A673 (cell line): ENCODE measurements at regions of chr7 and their contacts with region 1.

Region 1: DNA sequence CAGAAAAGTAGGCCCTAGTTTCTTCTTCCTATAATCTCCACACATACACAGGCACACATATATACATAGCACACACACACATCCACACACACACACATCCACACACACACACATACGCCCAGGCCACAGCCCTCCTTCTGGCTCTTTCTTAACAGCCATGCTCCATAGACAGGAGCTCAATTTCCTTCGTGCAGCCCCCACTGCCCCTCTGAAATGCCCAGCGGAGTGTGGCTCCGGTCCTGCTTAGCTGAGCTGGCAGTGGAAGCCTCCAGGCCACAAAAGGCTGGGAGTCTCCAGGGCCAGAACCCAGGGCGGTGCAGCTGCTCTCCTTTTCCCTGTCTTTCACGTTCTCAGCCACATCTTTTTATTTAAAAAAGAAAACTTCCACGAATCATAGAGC is 282.9 kb upstream of the IGFBP3 start:
- DNase-seq: no peak
- H3K4me3 ChIP-seq: no peak overlapping the region
- H3K27ac ChIP-seq: no peak overlapping the region
- H3K4me1 ChIP-seq: no peaks in the 10 kb centered on the region
- H3K27me3 ChIP-seq: no peaks in the 10 kb centered on the region
- CTCF ChIP-seq: no peak

Region 2: GRCh38 chr7:45917658-45918057 is 286.3 kb before region 1 on chr7:
- CTCF ChIA-PET with region 1: no interaction called
- POLR2A ChIA-PET with region 1: no interaction called
- intact Hi-C with region 1: no loop called
- DNase-seq: peak; percentile 78
- H3K4me3 ChIP-seq: no peak overlapping the region
- H3K27ac ChIP-seq: no peak overlapping the region
- H3K4me1 ChIP-seq: peaks cover 3% of the 10 kb centered on the region
- H3K27me3 ChIP-seq: peaks cover 71% of the 10 kb centered on the region
- CTCF ChIP-seq: peak; percentile 93

Region 3: GRCh38 chr7:46281071-46281470 is 77.1 kb after region 1 on chr7:
- CTCF ChIA-PET with region 1: no interaction called
- POLR2A ChIA-PET with region 1: interaction called, 19 read pairs
- intact Hi-C with region 1: no loop called
- DNase-seq: no peak
- H3K4me3 ChIP-seq: no peak overlapping the region
- H3K27ac ChIP-seq: no peak overlapping the region
- H3K4me1 ChIP-seq: no peaks in the 10 kb centered on the region
- H3K27me3 ChIP-seq: no peaks in the 10 kb centered on the region
- CTCF ChIP-seq: no peak

Region 4: DNA sequence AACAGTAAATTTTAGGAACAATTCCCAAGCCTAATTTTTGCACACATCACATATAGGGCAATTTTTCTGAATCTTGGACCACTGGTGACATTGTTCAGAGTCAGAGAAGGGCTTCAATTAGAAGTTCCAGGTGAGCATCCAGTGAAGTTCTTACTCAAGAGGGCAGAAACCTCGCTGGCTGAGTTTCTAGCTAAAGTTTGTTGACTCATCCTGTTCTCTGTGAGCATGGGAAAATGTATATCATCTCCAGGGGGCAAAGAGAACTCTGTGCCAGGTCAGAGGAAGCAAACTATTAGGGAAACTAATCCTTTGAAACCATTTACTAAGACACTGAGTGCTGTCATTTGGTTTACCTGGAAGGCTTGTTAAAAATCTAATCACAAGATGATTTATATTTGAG is 412.7 kb after region 1 on chr7:
- CTCF ChIA-PET with region 1: no interaction called
- POLR2A ChIA-PET with region 1: no interaction called
- intact Hi-C with region 1: no loop called
- DNase-seq: no peak
- H3K4me3 ChIP-seq: no peak overlapping the region
- H3K27ac ChIP-seq: no peak overlapping the region
- H3K4me1 ChIP-seq: no peaks in the 10 kb centered on the region
- H3K27me3 ChIP-seq: no peaks in the 10 kb centered on the region
- CTCF ChIP-seq: no peak